ENCODE measurements at regions of chr6 and their contacts with region 1.

Region 1: DNA sequence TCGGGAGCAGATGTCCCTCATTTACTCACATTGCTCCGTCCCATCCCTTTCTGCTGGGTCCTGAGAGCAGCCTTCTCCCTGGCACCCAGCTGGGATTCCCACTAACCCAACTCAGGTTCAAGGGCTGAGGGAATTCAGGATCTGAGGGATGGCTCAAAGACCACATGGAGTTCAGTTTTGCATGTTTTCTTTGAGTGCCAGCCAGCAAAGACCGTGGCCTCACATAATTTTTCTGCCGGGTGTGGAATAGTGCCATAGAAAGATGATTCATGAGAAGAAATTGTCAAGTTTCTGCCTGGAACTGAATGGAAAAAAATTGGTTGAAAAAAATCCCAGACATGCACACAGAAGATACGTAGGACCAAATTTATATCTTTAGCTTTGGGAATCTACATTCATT is 168.6 kb downstream of the CD83 start:
- H3K4me3 Mint-ChIP-seq: no peak overlapping the region
- H3K27ac Mint-ChIP-seq: no peak overlapping the region
- H3K4me1 Mint-ChIP-seq: peaks cover 10% of the 10 kb centered on the region
- H3K27me3 Mint-ChIP-seq: no peaks in the 10 kb centered on the region

Region 2: DNA sequence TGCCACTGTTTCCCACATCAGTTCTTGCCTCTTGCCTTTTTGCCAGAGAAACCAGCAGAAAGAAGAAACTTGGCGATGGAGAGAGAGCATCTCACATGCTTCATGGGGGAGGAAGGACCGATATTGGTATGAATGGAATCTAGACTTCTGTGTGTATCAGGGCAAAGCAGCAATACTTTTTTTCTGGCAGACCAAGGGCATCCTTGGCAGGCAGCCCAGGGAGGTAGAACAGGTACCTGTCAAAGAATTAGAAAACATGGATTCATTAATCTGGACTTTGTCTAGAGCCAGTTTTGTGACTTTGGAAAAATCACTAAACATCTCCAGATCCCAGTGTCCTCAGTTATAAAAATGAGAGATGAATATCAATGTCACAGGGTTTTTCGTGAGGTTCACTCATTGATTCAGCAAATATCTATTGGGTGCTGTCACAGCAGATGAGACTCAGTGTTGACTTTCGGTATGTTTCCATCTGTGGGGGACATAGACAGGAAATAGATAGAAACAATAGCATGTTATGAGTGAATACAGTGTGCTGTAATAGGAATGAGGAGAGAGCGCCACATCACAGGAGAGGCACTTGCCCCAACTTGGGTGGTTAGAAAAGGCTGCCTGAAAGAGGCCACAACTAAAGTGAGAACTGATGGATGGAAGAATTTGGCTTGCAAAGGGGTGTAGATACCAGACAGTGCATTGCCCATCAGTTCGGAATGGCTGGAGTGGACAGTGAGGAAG is 54.4 kb before region 1 on chr6:
- intact Hi-C with region 1: loop called (anchors 10 kb)
- H3K4me3 Mint-ChIP-seq: no peak overlapping the region
- H3K27ac Mint-ChIP-seq: no peak overlapping the region
- H3K4me1 Mint-ChIP-seq: no peaks in the 10 kb centered on the region
- H3K27me3 Mint-ChIP-seq: no peaks in the 10 kb centered on the region